ENCODE measurements at regions of chr2 and their contacts with region 1.

Region 1: DNA sequence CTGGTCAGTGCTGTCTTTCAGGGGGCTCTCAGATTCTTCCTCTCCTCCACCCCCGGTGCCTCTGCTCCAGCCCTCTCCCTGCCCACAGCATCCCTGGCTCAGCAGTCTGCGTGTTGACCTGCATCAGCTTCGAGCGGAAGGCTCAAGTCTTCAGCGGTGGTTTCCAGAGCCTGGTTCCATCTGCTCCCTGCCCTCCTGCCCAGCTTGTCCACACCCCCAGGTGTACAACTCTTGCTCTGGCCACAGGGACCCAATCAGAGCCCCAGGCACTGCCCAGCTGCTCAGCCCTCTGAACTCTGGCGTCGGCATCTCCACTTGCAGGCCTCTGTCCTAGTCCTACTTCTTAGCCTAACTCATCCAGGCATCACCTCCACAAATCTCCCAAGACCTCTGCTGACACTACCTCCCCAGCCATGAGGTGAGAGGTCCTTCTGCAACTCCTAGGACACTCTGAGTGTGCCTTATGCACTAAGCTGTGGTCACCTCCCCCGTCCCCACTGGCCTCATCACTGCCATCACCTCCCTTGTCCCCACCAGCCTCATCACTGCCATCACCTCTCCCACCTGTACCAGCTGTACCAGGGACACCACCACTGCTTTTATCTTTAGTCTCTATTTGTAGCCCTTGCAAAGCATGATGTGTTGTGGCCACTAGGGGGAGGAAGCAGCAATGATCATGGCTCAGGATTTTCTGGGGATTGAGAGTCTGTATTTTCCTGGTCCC is 60.9 kb downstream of the EDAR start:
- DNase-seq: peak in 2 of 5 donors; percentile 33 to 48
- H3K4me3 ChIP-seq: no peak overlapping the region
- H3K4me3 Mint-ChIP-seq: no peak overlapping the region
- H3K27ac ChIP-seq: no peak overlapping the region
- H3K27ac Mint-ChIP-seq: peak overlapping the region in 1 of 8 donors; percentile 3
- H3K4me1 ChIP-seq: no peaks in the 10 kb centered on the region
- H3K4me1 Mint-ChIP-seq: peaks cover 2 to 6% (median 5%) of the 10 kb centered on the region in 3 donors
- H3K27me3 ChIP-seq: no peaks in the 10 kb centered on the region
- H3K27me3 Mint-ChIP-seq: peaks cover 0 to 2% of the 10 kb centered on the region in 2 donors

Region 2: GRCh38 chr2:108988796-108989713 is 61.0 kb after region 1 on chr2 and contains the start of gene EDAR:
- CTCF ChIA-PET with region 1: interaction called, 12 read pairs
- POLR2A ChIA-PET with region 1: no interaction called
- DNase-seq: peak in 3 of 5 donors; percentile 4 to 55 (median 21)
- H3K4me3 ChIP-seq: peak within 1 kb of the TSS; percentile 66
- H3K4me3 Mint-ChIP-seq: peak within 1 kb of the TSS in 6 of 7 donors; percentile 67 to 87 (median 72)
- H3K27ac ChIP-seq: no peak within 1 kb of the TSS
- H3K27ac Mint-ChIP-seq: peak within 1 kb of the TSS in 3 of 8 donors; percentile 17 to 68 (median 25)
- H3K4me1 ChIP-seq: peaks cover 23% of the 10 kb centered on the region
- H3K4me1 Mint-ChIP-seq: peaks cover 23 to 28% (median 25%) of the 10 kb centered on the region in 3 donors
- H3K27me3 ChIP-seq: no peaks in the 10 kb centered on the region
- H3K27me3 Mint-ChIP-seq: peaks cover 12 to 20% of the 10 kb centered on the region in 2 donors
- total RNA-seq, gene EDAR: 0.07 to 0.16 TPM

Measured in CD8-positive, alpha-beta memory T cell (primary cell).